B cell (primary cell): ENCODE measurements at regions of chr3 and their contacts with region 1.

Region 1: DNA sequence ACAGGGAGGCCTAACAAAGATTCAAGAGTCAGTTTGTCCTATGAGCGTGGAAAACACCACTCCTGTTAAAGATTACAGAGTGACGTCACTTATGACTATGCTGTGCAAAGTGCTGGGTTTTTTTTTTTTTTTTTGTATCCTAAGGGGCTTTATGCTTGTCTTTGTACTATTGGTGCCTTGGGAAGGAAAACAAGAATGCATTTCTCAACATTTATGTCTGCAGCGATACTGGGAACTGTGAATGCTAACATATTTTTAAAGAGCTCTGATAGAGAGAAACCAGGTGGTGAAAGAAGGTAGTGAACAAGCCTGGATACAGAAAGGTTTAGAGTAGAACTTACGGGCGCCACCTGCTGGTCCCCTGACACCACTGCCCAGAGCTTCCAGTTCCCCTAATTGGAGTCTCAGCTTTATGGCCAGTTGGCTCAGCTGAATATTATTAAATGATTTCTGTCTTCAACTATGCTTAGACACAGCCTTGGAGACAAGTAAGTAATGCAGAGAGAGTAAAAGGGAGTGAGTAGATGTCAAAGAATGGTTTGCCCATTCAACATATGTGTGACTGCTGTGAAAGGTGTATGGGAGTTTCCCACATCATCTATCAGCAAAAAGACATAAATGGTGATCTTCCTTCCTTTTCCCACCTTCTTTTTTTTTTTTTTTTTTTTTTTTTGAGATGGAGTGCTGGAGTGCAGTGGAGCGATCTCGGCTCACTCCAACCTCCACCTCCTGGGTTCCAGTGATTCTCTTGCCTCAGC is 807.9 kb upstream of the CFAP20DC start:
- DNase-seq: peak; percentile 78
- ATAC-seq: peak; percentile 90
- H3K4me3 ChIP-seq: no peak overlapping the region
- H3K4me3 Mint-ChIP-seq: no peak overlapping the region
- H3K27ac ChIP-seq: no peak overlapping the region
- H3K27ac Mint-ChIP-seq: no peak overlapping the region
- H3K4me1 ChIP-seq: no peaks in the 10 kb centered on the region
- H3K4me1 Mint-ChIP-seq: peaks cover 2% of the 10 kb centered on the region
- H3K27me3 ChIP-seq: no peaks in the 10 kb centered on the region
- H3K27me3 Mint-ChIP-seq: no peaks in the 10 kb centered on the region
- CTCF ChIP-seq: peak; percentile 93

Region 2: DNA sequence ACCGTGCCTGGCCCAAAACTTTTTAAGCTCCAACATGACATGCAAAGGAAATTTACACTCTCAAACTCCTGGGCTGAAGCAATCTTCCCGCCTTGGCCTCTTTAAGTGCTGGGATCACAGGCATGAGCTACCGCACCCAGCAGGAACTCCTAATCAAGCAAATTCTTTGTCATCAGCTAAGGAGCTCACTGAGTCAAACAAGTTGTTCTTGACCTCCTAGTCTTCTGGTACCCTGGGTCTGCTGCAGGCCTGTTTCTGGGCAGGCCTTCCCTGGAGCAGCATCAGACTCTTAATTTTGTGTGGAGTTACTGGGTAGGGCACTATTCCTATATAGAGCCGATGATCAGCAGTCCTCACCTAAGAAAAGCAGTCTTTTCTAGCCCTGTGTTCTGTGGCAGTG is 1918.0 kb before region 1 on chr3:
- CTCF ChIA-PET with region 1: no interaction called
- POLR2A ChIA-PET with region 1: interaction called, 11 read pairs
- intact Hi-C with region 1: no loop called
- DNase-seq: no peak
- ATAC-seq: no peak
- H3K4me3 ChIP-seq: no peak overlapping the region
- H3K4me3 Mint-ChIP-seq: no peak overlapping the region
- H3K27ac ChIP-seq: no peak overlapping the region
- H3K27ac Mint-ChIP-seq: no peak overlapping the region
- H3K4me1 ChIP-seq: no peaks in the 10 kb centered on the region
- H3K4me1 Mint-ChIP-seq: no peaks in the 10 kb centered on the region
- H3K27me3 ChIP-seq: no peaks in the 10 kb centered on the region
- H3K27me3 Mint-ChIP-seq: no peaks in the 10 kb centered on the region
- CTCF ChIP-seq: no peak

Region 3: GRCh38 chr3:59212128-59212779 is 645.5 kb before region 1 on chr3:
- CTCF ChIA-PET with region 1: interaction called, 26 read pairs
- POLR2A ChIA-PET with region 1: no interaction called
- intact Hi-C with region 1: no loop called
- DNase-seq: peak; percentile 50
- ATAC-seq: no peak
- H3K4me3 ChIP-seq: no peak overlapping the region
- H3K4me3 Mint-ChIP-seq: no peak overlapping the region
- H3K27ac ChIP-seq: no peak overlapping the region
- H3K27ac Mint-ChIP-seq: no peak overlapping the region
- H3K4me1 ChIP-seq: no peaks in the 10 kb centered on the region
- H3K4me1 Mint-ChIP-seq: no peaks in the 10 kb centered on the region
- H3K27me3 ChIP-seq: no peaks in the 10 kb centered on the region
- H3K27me3 Mint-ChIP-seq: peaks cover 9% of the 10 kb centered on the region
- CTCF ChIP-seq: peak; percentile 81

Region 4: DNA sequence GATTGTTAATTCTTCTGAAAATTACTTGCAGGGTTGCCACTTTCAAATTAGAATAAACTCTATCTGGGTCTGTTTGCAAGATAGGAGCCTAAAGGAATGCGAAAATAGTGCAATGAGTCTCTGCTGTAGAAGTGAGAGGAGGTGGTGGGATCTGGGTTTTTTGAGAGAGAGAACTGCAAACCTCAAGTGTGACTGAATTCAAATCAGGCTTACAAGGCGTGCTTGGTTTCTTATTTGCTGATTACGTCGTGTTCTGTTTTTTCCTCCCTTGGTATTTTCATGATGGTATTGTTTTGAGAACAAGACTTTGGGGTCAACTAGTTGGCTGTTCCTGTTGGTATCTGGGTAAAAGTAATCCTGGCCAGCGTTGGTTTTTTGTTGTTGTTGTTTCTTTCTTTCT is 317.1 kb before region 1 on chr3:
- CTCF ChIA-PET with region 1: no interaction called
- POLR2A ChIA-PET with region 1: no interaction called
- intact Hi-C with region 1: no loop called
- DNase-seq: no peak
- ATAC-seq: no peak
- H3K4me3 ChIP-seq: no peak overlapping the region
- H3K4me3 Mint-ChIP-seq: no peak overlapping the region
- H3K27ac ChIP-seq: no peak overlapping the region
- H3K27ac Mint-ChIP-seq: no peak overlapping the region
- H3K4me1 ChIP-seq: no peaks in the 10 kb centered on the region
- H3K4me1 Mint-ChIP-seq: peaks cover 3% of the 10 kb centered on the region
- H3K27me3 ChIP-seq: no peaks in the 10 kb centered on the region
- H3K27me3 Mint-ChIP-seq: no peaks in the 10 kb centered on the region
- CTCF ChIP-seq: no peak

Region 5: GRCh38 chr3:59845386-59845785 is 12.4 kb before region 1 on chr3:
- CTCF ChIA-PET with region 1: interaction called, 27 read pairs
- POLR2A ChIA-PET with region 1: no interaction called
- intact Hi-C with region 1: no loop called
- DNase-seq: no peak
- ATAC-seq: no peak
- H3K4me3 ChIP-seq: no peak overlapping the region
- H3K4me3 Mint-ChIP-seq: no peak overlapping the region
- H3K27ac ChIP-seq: no peak overlapping the region
- H3K27ac Mint-ChIP-seq: no peak overlapping the region
- H3K4me1 ChIP-seq: peaks cover 12 to 17% of the 10 kb centered on the region in 2 donors
- H3K4me1 Mint-ChIP-seq: peaks cover 26% of the 10 kb centered on the region
- H3K27me3 ChIP-seq: no peaks in the 10 kb centered on the region
- H3K27me3 Mint-ChIP-seq: no peaks in the 10 kb centered on the region
- CTCF ChIP-seq: no peak